B cell (primary cell): ENCODE measurements at regions of chr19 and their contacts with region 1.

Region 1: GRCh38 chr19:58475714-58476497 is at the start of gene ZNF446:
- DNase-seq: peak; percentile 97
- ATAC-seq: peak; percentile 89
- H3K4me3 ChIP-seq: peak within 1 kb of the TSS; percentile 39 to 85 (median 70)
- H3K4me3 Mint-ChIP-seq: peak within 1 kb of the TSS; percentile 98
- H3K27ac ChIP-seq: peak within 1 kb of the TSS; percentile 82 to 89
- H3K27ac Mint-ChIP-seq: peak within 1 kb of the TSS; percentile 98
- H3K4me1 ChIP-seq: peaks cover 14 to 18% of the 10 kb centered on the region in 2 donors
- H3K4me1 Mint-ChIP-seq: peaks cover 20% of the 10 kb centered on the region
- H3K27me3 ChIP-seq: no peaks in the 10 kb centered on the region
- H3K27me3 Mint-ChIP-seq: no peaks in the 10 kb centered on the region
- CTCF ChIP-seq: no peak
- total RNA-seq, gene ZNF446: 15.0 and 18.5 TPM in 2 replicates

Region 2: GRCh38 chr19:58326914-58327726 is 148.8 kb before region 1 on chr19 and contains the start of gene ZSCAN22:
- CTCF ChIA-PET with region 1: no interaction called
- POLR2A ChIA-PET with region 1: no interaction called
- intact Hi-C with region 1: loop called (anchors 1 kb)
- DNase-seq: peak; percentile 90
- ATAC-seq: peak; percentile 92
- H3K4me3 ChIP-seq: peak within 1 kb of the TSS; percentile 72 to 98 (median 83)
- H3K4me3 Mint-ChIP-seq: no peak within 1 kb of the TSS
- H3K27ac ChIP-seq: peak within 1 kb of the TSS; percentile 71 to 82
- H3K27ac Mint-ChIP-seq: no peak within 1 kb of the TSS
- H3K4me1 ChIP-seq: peaks cover 11 to 23% of the 10 kb centered on the region in 2 donors
- H3K4me1 Mint-ChIP-seq: no peaks in the 10 kb centered on the region
- H3K27me3 ChIP-seq: no peaks in the 10 kb centered on the region
- H3K27me3 Mint-ChIP-seq: no peaks in the 10 kb centered on the region
- CTCF ChIP-seq: no peak
- total RNA-seq, gene ZSCAN22: 7.1 TPM in 2 replicates

Region 3: GRCh38 chr19:58400916-58401839 is 74.7 kb before region 1 on chr19:
- CTCF ChIA-PET with region 1: no interaction called
- POLR2A ChIA-PET with region 1: no interaction called
- intact Hi-C with region 1: loop called (anchors 1 kb)
- DNase-seq: peak; percentile 100
- ATAC-seq: peak; percentile 97
- H3K4me3 ChIP-seq: peak overlapping the region; percentile 32 to 69 (median 64)
- H3K4me3 Mint-ChIP-seq: peak overlapping the region; percentile 89
- H3K27ac ChIP-seq: peak overlapping the region; percentile 62 to 87
- H3K27ac Mint-ChIP-seq: peak overlapping the region; percentile 91
- H3K4me1 ChIP-seq: peaks cover 7 to 15% of the 10 kb centered on the region in 2 donors
- H3K4me1 Mint-ChIP-seq: peaks cover 7% of the 10 kb centered on the region
- H3K27me3 ChIP-seq: peaks cover 0 to 19% (median 7%) of the 10 kb centered on the region in 4 experiments
- H3K27me3 Mint-ChIP-seq: peaks cover 3% of the 10 kb centered on the region
- CTCF ChIP-seq: no peak

Region 4: DNA sequence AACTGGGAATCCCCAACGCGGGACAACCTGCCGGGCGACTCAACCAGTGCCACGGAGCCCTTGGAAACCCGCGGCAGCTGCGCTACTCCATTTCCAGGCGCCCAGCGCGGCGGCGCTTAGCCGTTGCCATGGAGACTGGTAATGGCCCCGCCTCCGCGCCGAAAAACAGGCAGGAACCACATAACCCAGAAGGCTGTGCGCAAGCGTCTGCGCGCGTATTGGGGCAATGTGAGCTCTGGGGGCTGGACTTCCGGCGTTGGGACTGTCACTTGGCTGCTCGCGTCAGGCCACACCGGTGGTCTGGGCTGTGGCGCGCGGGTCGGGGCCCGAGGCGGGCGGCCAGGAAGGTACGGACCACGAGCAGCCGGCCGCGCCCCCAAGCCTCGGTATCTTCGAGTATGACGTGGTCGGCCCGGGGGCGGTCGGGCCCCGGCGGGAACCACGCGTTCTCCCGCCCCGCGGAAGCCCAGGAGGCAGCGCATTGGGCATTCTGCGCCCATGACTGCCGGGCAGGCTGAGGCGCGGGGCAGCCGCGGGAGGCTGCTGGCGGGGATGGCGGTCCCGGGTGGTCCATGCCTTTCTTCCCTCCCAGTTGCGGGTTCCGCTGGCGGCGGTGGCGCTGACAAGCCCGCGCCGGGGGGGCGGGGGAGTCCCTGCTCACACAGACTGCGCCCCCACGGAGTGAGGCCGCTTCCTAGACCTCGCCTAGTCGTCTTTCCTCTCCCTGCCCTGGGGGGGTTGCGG is 24.4 kb before region 1 on chr19 and contains the start of gene ZNF324B:
- CTCF ChIA-PET with region 1: no interaction called
- POLR2A ChIA-PET with region 1: interaction called, 3 read pairs
- intact Hi-C with region 1: loop called (anchors 1 kb)
- DNase-seq: peak; percentile 97
- ATAC-seq: peak; percentile 97
- H3K4me3 ChIP-seq: peak within 1 kb of the TSS; percentile 55 to 81 (median 73)
- H3K4me3 Mint-ChIP-seq: peak within 1 kb of the TSS; percentile 93
- H3K27ac ChIP-seq: peak within 1 kb of the TSS in 1 of 2 donors; percentile 66
- H3K27ac Mint-ChIP-seq: peak within 1 kb of the TSS; percentile 85
- H3K4me1 ChIP-seq: peaks cover 5 to 12% of the 10 kb centered on the region in 2 donors
- H3K4me1 Mint-ChIP-seq: peaks cover 20% of the 10 kb centered on the region
- H3K27me3 ChIP-seq: peaks cover 0 to 24% (median 2%) of the 10 kb centered on the region in 4 experiments
- H3K27me3 Mint-ChIP-seq: peaks cover 13% of the 10 kb centered on the region
- CTCF ChIP-seq: no peak
- total RNA-seq, gene ZNF324B: 15.0 and 17.4 TPM in 2 replicates

Region 5: DNA sequence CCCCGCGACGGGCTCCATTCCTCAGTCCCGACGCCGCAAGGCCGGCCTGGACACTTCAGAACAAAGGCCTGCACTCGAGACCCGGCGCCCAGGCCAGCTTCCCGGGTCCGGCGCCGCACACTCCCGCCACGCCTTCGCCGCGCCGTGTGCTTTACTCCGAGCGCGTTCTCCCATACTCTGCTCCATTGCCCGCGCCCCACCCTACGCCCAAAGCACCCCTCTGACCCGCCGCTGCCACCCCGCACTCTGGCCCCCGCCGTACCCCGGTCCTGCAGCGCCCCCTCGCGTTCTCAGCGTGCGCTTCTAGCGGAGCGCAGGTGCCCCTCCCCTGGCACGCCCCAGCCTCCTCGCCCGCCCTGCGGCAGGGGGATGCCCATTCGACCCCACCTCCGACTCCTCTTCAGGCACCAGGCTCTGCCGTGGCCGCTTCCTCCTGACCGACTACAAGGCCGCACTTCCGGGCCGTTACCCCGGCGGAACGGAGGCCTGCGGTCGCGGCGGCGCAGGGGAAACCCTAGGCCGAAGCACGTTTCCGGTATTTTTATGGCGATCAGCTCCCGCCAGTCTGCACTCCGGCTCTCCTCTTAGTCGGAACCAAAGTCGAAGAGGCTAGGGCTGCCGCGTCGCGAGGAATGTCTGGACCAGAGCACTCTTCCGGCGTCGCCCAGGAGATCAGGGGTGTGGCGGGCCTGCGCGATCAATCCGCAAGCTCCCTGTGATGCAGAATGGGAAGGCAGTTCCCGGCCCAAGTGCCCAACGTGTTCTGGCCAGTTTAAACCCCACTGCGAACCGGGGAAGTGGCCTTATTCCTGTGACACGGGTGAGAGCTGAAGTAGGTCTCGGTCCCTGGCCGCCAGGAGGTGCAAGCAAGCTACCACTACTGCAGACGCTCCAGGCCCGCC is 43.7 kb after region 1 on chr19 and contains the start of gene ZBTB45:
- CTCF ChIA-PET with region 1: no interaction called
- POLR2A ChIA-PET with region 1: interaction called, 3 read pairs
- intact Hi-C with region 1: loop called (anchors 1 kb)
- DNase-seq: peak; percentile 96
- ATAC-seq: peak; percentile 84
- H3K4me3 ChIP-seq: peak within 1 kb of the TSS; percentile 64 to 78 (median 71)
- H3K4me3 Mint-ChIP-seq: peak within 1 kb of the TSS; percentile 98
- H3K27ac ChIP-seq: peak within 1 kb of the TSS; percentile 76 to 96
- H3K27ac Mint-ChIP-seq: peak within 1 kb of the TSS; percentile 99
- H3K4me1 ChIP-seq: peaks cover 18 to 28% of the 10 kb centered on the region in 2 donors
- H3K4me1 Mint-ChIP-seq: peaks cover 42% of the 10 kb centered on the region
- H3K27me3 ChIP-seq: no peaks in the 10 kb centered on the region
- H3K27me3 Mint-ChIP-seq: no peaks in the 10 kb centered on the region
- CTCF ChIP-seq: peak; percentile 72
- total RNA-seq, gene ZBTB45: 20.9 and 28.4 TPM in 2 replicates

Region 6: DNA sequence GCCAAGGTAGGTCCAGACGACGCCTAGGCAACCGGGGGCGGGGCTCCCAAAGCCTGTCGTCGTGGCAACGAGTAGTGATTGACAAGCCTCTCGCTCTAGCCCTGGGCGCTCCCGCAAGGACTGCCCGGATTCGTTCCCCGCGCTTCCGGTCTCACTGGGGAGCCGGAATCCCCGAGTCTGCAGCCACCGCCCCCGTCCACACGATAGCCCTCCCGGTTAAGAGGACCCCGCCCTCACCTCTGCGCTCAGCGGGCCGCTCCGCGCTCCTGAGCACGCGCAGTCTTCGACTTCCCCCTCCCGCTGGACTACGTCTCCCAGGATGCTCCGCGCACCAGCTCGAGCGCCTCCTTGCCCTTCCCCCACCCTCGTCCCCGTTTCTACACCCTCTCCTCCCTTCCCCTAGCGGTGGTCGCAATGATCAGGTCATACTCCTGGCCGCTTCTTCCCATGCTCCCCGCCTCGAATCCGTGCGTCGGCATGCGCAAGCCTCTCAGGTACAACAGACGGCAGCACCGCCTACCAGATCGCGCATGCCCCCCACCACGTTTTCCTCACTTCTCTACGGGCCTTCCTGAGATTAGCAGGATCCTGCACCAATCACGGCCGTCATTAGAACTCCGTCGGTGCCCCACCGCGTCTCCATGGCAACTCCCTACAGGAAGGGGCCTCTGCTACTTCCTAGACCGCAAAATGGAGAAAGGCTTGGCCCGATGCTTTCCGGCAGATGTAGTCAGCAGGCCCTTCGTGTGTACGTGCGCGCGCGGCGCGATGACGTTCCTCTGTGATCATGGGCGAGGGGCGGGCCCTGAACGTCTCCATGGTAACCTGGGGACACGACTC is 97.1 kb after region 1 on chr19 and contains the start of gene MZF1:
- CTCF ChIA-PET with region 1: no interaction called
- POLR2A ChIA-PET with region 1: no interaction called
- intact Hi-C with region 1: loop called (anchors 1 kb)
- DNase-seq: peak; percentile 100
- ATAC-seq: peak; percentile 62
- H3K4me3 ChIP-seq: peak within 1 kb of the TSS; percentile 59 to 77 (median 74)
- H3K4me3 Mint-ChIP-seq: peak within 1 kb of the TSS; percentile 95
- H3K27ac ChIP-seq: peak within 1 kb of the TSS; percentile 99
- H3K27ac Mint-ChIP-seq: peak within 1 kb of the TSS; percentile 99
- H3K4me1 ChIP-seq: peaks cover 25 to 37% of the 10 kb centered on the region in 2 donors
- H3K4me1 Mint-ChIP-seq: peaks cover 41% of the 10 kb centered on the region
- H3K27me3 ChIP-seq: no peaks in the 10 kb centered on the region
- H3K27me3 Mint-ChIP-seq: no peaks in the 10 kb centered on the region
- CTCF ChIP-seq: no peak
- total RNA-seq, gene MZF1: 79.4 and 81.4 TPM in 2 replicates